Activated B cell treated with CpG ODN at 0.5 μM for 24 hours (primary cell): ENCODE measurements at regions of chr14 and their contacts with region 1.

Region 1: GRCh38 chr14:68065322-68065721 is 245.7 kb downstream of the RAD51B start:
- DNase-seq: no peak
- ATAC-seq: no peak
- H3K4me3 Mint-ChIP-seq: no peak overlapping the region
- H3K27ac Mint-ChIP-seq: no peak overlapping the region
- H3K4me1 Mint-ChIP-seq: no peaks in the 10 kb centered on the region
- H3K27me3 Mint-ChIP-seq: no peaks in the 10 kb centered on the region
- CTCF ChIP-seq: no peak

Region 2: DNA sequence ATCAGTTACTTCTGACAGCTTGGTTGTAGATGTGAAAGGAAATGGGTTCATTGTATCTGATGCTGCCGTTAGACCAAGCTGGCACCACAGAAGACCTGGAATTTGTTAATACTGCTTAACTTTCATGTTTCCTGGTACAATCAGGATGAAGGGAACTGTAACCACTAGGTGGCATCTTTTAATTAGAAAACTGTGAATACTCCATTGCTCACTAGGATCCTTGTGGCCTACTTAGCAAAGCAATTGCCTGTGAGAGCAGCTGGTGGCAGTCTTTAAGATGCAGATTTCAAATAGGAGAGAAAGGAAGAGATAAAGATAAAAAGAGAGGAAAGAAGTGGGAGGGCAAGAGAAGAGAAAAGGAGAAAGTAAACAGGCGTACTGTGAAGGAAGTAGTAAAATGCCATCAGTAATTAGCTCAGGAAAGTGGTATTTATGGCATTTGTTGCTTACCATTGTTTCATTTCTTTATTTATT is 131.3 kb before region 1 on chr14:
- CTCF ChIA-PET with region 1: no interaction called
- POLR2A ChIA-PET with region 1: no interaction called
- intact Hi-C with region 1: no loop called
- DNase-seq: no peak
- ATAC-seq: peak; percentile 77
- H3K4me3 Mint-ChIP-seq: no peak overlapping the region
- H3K27ac Mint-ChIP-seq: no peak overlapping the region
- H3K4me1 Mint-ChIP-seq: peaks cover 4% of the 10 kb centered on the region
- H3K27me3 Mint-ChIP-seq: no peaks in the 10 kb centered on the region
- CTCF ChIP-seq: no peak

Region 3: GRCh38 chr14:68079941-68080697 is 14.8 kb after region 1 on chr14:
- CTCF ChIA-PET with region 1: no interaction called
- POLR2A ChIA-PET with region 1: no interaction called
- intact Hi-C with region 1: loop called (anchors 2 kb)
- DNase-seq: no peak
- ATAC-seq: no peak
- H3K4me3 Mint-ChIP-seq: no peak overlapping the region
- H3K27ac Mint-ChIP-seq: no peak overlapping the region
- H3K4me1 Mint-ChIP-seq: peaks cover 49% of the 10 kb centered on the region
- H3K27me3 Mint-ChIP-seq: no peaks in the 10 kb centered on the region
- CTCF ChIP-seq: no peak

Region 4: DNA sequence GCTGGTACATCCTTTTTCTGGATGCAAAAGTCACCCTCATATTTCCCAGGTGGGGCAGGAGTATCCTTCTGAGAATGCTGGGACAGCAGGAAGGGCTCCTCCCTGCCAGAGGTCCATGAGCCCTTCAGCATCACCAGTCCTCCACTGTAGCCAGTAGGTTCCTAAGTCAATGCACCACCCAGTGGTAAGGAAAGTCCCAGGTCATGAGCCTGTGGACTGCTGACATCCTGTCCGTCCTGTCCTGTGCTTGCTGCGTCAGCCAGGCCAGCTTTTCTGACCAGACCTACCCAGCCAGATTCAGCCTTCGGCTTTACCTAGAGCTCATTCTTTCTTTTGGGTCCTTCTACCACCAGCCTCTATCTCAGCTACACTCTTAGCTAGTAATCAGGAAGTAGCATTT is 936.7 kb after region 1 on chr14:
- CTCF ChIA-PET with region 1: no interaction called
- POLR2A ChIA-PET with region 1: interaction called, 16 read pairs
- intact Hi-C with region 1: no loop called
- DNase-seq: no peak
- ATAC-seq: no peak
- H3K4me3 Mint-ChIP-seq: no peak overlapping the region
- H3K27ac Mint-ChIP-seq: no peak overlapping the region
- H3K4me1 Mint-ChIP-seq: no peaks in the 10 kb centered on the region
- H3K27me3 Mint-ChIP-seq: peaks cover 13% of the 10 kb centered on the region
- CTCF ChIP-seq: no peak